Activated CD4-positive, alpha-beta T cell treated with anti-CD3 and anti-CD28 coated beads for 36 hours (primary cell): ENCODE measurements at regions of chr11 and their contacts with region 1.

Region 1: GRCh38 chr11:74929431-74930363 is 19.2 kb downstream of the XRRA1 start:
- DNase-seq: peak; percentile 80
- ATAC-seq: peak; percentile 74
- H3K4me3 Mint-ChIP-seq: no peak overlapping the region
- H3K27ac Mint-ChIP-seq: no peak overlapping the region
- H3K4me1 Mint-ChIP-seq: peaks cover 11% of the 10 kb centered on the region
- H3K27me3 Mint-ChIP-seq: no peaks in the 10 kb centered on the region

Region 2: DNA sequence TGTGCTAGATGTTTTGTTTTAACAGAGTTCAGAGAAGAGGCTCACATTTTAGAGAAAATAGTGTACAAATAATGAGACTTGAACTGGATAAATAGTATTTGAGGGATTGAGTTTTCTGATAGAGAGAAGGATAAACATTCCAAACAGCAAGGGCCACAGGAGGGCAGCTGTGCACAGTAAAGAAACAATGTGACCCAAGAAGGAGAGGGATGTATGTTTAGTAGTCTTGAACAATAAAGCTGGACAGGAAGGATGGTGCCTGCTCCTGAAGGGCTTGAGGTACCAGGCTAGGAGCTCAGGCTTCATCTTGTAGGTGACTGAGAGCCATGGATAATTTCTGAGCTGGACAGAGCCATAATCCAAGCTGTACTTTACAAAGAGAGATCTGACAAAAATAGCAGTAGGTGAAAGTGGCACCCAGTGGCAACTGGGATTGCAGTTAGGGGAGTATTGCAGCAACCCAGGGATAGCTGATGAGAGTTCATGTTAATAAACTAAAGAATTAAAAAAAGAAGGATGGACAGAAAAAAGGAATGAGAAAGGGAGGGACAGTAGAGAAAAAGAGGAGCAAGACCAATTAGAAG is 11.7 kb after region 1 on chr11:
- CTCF ChIA-PET with region 1: interaction called, 13 read pairs
- POLR2A ChIA-PET with region 1: no interaction called
- intact Hi-C with region 1: loop called in 1 of 2 experiments (anchors 1 kb)
- DNase-seq: no peak
- ATAC-seq: no peak
- H3K4me3 Mint-ChIP-seq: no peak overlapping the region
- H3K27ac Mint-ChIP-seq: no peak overlapping the region
- H3K4me1 Mint-ChIP-seq: peaks cover 29% of the 10 kb centered on the region
- H3K27me3 Mint-ChIP-seq: no peaks in the 10 kb centered on the region

Region 3: GRCh38 chr11:75022759-75023396 is 93.2 kb after region 1 on chr11:
- CTCF ChIA-PET with region 1: interaction called, 14 read pairs
- POLR2A ChIA-PET with region 1: no interaction called
- intact Hi-C with region 1: loop called in 1 of 2 experiments (anchors 2 kb)
- DNase-seq: peak; percentile 86
- ATAC-seq: peak; percentile 91
- H3K4me3 Mint-ChIP-seq: no peak overlapping the region
- H3K27ac Mint-ChIP-seq: no peak overlapping the region
- H3K4me1 Mint-ChIP-seq: no peaks in the 10 kb centered on the region
- H3K27me3 Mint-ChIP-seq: no peaks in the 10 kb centered on the region

Region 4: DNA sequence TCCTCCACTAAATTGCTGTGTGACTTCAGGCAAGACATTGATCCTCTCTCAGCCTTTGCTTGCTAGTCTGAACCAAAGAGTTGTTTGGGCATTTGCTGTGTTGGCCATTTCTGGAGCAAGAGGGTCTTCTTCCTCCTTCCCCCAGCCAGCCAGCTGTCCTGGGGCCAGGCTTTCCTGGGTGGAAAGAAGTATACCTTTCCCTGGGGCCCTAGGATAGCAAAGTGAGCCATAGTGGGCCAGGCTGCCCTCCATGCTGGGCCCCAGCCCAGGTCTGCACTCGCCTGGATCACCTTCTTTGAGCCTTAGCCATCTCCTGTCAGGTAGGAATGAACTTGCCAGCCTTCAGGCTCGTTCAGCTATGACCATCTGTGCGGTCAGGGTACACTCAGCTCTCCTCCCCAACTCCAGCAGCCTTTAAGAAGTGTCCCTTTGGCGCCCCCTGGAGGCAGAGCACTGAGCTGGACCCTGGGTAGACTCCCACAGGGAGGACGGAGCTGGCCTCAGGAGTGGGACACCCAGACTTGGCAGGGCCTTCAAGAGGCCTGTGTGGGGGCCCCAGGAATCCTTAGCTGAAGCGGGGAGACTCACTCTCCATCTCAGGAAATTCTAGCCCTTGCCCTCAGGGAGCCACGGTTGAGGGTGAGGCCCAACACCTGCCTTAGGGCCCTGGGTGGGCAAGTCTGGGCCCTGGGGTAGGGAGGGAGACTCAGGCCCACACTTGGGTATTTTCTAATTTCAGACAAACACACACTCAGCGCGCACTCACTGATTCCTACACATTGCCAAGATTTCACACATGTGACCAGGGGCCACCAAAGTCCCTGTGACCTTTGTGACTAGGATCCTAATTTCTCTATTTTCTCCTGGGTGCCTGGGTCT is 275.2 kb after region 1 on chr11:
- CTCF ChIA-PET with region 1: interaction called, 28 read pairs
- POLR2A ChIA-PET with region 1: no interaction called
- intact Hi-C with region 1: loop called in 1 of 2 experiments (anchors 1 kb)
- DNase-seq: peak; percentile 93
- ATAC-seq: peak; percentile 99
- H3K4me3 Mint-ChIP-seq: no peak overlapping the region
- H3K27ac Mint-ChIP-seq: no peak overlapping the region
- H3K4me1 Mint-ChIP-seq: no peaks in the 10 kb centered on the region
- H3K27me3 Mint-ChIP-seq: peaks cover 2% of the 10 kb centered on the region

Region 5: GRCh38 chr11:75248690-75249268 is 319.1 kb after region 1 on chr11:
- CTCF ChIA-PET with region 1: interaction called, 13 read pairs
- POLR2A ChIA-PET with region 1: no interaction called
- intact Hi-C with region 1: loop called (anchors 1 kb)
- DNase-seq: peak; percentile 93
- ATAC-seq: peak; percentile 98
- H3K4me3 Mint-ChIP-seq: no peak overlapping the region
- H3K27ac Mint-ChIP-seq: no peak overlapping the region
- H3K4me1 Mint-ChIP-seq: no peaks in the 10 kb centered on the region
- H3K27me3 Mint-ChIP-seq: no peaks in the 10 kb centered on the region